ENCODE measurements at regions of chr4 and their contacts with region 1.

Region 1: GRCh38 chr4:83259586-83259985 is 25.0 kb downstream of the COQ2 start:
- DNase-seq: no peak
- ATAC-seq: no peak
- H3K4me3 Mint-ChIP-seq: no peak overlapping the region
- H3K27ac Mint-ChIP-seq: no peak overlapping the region
- H3K4me1 Mint-ChIP-seq: peaks cover 11% of the 10 kb centered on the region
- H3K27me3 Mint-ChIP-seq: no peaks in the 10 kb centered on the region

Region 2: DNA sequence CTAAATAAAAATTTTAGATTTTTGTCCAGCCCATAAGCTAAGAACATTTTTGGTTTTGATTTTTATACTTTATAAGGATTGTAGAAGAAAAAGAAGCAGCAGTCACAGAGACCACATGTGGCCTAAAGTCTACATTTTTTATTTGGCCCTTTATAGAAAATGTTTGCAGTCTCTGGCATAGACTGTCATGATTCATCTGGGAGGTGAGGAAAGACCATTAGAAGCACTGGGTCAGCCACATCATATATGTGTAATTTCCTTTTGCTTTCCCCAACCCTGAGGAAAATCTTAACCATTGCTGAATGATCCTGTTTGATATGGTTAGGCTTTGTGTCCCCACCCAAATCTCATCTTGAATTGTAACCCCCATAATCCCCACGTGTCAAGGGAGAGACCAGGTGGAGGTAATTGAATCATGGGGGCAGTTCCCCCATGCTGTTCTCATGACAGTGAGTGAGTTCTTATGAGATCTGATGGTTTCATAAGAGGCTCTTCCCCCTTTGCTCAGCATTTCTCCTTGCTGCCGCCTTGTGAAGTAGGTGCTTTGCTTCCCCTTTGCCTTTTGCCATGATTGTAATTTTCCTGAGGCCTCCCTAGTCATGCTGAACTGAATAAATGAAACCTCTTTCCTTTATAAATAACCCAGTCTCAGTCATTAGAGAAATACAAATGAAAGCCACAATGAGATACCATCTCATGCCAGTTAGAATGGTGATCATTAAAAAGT is 236.7 kb before region 1 on chr4:
- CTCF ChIA-PET with region 1: no interaction called
- POLR2A ChIA-PET with region 1: no interaction called
- DNase-seq: no peak
- ATAC-seq: no peak
- H3K4me3 Mint-ChIP-seq: no peak overlapping the region
- H3K27ac Mint-ChIP-seq: no peak overlapping the region
- H3K4me1 Mint-ChIP-seq: peaks cover 10% of the 10 kb centered on the region
- H3K27me3 Mint-ChIP-seq: no peaks in the 10 kb centered on the region

Region 3: GRCh38 chr4:83054928-83055327 is 204.7 kb before region 1 on chr4:
- CTCF ChIA-PET with region 1: interaction called, 14 read pairs
- POLR2A ChIA-PET with region 1: no interaction called
- DNase-seq: peak; percentile 41
- ATAC-seq: no peak
- H3K4me3 Mint-ChIP-seq: no peak overlapping the region
- H3K27ac Mint-ChIP-seq: no peak overlapping the region
- H3K4me1 Mint-ChIP-seq: no peaks in the 10 kb centered on the region
- H3K27me3 Mint-ChIP-seq: no peaks in the 10 kb centered on the region

Region 4: DNA sequence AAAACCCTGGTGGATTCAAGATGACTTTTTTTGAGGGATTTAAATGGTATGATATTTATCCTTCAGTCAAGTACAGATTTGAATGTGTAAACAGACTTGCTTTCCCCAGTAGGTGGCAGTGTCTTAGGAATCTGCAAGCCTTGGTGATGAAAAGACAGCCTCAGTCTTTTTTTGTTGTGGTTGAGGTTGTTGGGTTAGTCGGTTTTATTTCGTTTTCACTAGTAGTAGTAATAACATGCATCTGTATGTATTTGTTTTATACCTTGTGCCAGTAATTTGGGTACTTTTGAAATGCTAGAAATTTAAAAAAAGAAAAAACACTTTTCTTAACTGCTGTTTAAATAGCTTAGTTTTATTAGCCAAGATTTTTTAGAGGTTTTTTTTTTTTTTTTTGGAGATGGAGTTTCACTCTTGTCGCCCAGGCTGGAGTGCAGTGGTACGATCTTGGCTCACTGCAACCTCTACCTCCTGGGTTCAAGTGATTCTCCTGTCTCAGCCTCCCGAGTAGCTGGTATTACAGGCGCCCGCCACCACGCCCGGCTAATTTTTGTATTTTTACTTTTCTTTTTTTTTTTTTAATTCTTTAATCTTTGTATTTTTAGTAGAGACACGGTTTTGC is 185.4 kb before region 1 on chr4:
- CTCF ChIA-PET with region 1: interaction called, 54 read pairs
- POLR2A ChIA-PET with region 1: no interaction called
- DNase-seq: peak; percentile 84
- ATAC-seq: peak; percentile 91
- H3K4me3 Mint-ChIP-seq: peak overlapping the region; percentile 59
- H3K27ac Mint-ChIP-seq: peak overlapping the region; percentile 48
- H3K4me1 Mint-ChIP-seq: peaks cover 17% of the 10 kb centered on the region
- H3K27me3 Mint-ChIP-seq: no peaks in the 10 kb centered on the region

Region 5: GRCh38 chr4:83083925-83084475 is 175.6 kb before region 1 on chr4:
- CTCF ChIA-PET with region 1: interaction called, 18 read pairs
- POLR2A ChIA-PET with region 1: no interaction called
- DNase-seq: peak; percentile 87
- ATAC-seq: peak; percentile 98
- H3K4me3 Mint-ChIP-seq: peak overlapping the region; percentile 38
- H3K27ac Mint-ChIP-seq: peak overlapping the region; percentile 90
- H3K4me1 Mint-ChIP-seq: peaks cover 36% of the 10 kb centered on the region
- H3K27me3 Mint-ChIP-seq: no peaks in the 10 kb centered on the region